Naive thymus-derived CD4-positive, alpha-beta T cell (primary cell): ENCODE measurements at regions of chr1 and their contacts with region 1.

Region 1: DNA sequence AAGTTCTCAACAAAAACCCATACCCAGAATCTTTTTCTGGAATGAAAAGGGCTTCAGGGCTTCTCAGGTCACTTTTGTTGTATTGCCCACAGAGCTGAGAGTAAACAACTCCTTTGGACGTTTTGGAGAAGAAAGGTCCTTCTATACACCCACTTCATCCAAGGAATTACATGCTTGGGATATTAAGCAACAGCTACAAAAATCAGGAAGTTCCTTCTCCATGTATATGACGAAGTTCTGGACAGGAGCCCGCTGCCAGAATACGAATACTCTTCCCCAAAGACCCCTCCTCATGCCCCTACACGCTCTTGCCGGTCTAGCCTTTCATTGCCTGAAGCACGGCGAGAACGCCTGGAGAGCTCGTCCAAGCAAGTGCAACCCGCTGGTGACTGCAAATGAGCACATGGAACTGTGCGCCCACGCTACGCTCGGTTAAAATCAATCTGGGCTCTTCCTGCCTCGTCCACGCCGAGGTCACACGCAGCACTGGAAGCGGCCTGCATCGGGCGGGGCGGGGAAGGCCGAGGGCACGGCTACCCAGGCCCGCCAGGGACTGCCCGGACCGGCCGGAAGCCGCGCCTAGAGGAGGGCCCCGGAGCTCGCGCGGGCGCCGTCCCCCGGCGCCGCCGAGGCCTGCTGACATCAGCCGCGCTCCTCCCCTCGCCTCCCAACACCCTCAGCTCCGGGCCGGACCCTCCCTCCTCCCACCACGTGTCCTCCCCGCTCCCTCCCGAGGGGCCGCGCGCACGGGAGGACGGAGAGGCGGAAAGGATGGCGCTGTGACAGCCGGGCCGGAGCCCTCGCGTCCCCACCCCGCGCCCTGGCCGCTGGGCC is at the start of gene POGK:
- DNase-seq: peak; percentile 70 to 89 (median 77)
- ATAC-seq: peak; percentile 95
- H3K4me3 ChIP-seq: peak within 1 kb of the TSS; percentile 60
- H3K4me3 Mint-ChIP-seq: peak within 1 kb of the TSS; percentile 89 to 97 (median 92)
- H3K27ac ChIP-seq: peak within 1 kb of the TSS; percentile 90
- H3K27ac Mint-ChIP-seq: peak within 1 kb of the TSS; percentile 91 to 100 (median 94)
- H3K4me1 ChIP-seq: peaks cover 13 to 21% of the 10 kb centered on the region in 2 donors
- H3K4me1 Mint-ChIP-seq: peaks cover 23 to 55% (median 48%) of the 10 kb centered on the region in 7 donors
- H3K27me3 ChIP-seq: no peaks in the 10 kb centered on the region
- H3K27me3 Mint-ChIP-seq: no peaks in the 10 kb centered on the region
- total RNA-seq, gene POGK: 24.7 to 38.7 (median 36.9) TPM

Region 2: DNA sequence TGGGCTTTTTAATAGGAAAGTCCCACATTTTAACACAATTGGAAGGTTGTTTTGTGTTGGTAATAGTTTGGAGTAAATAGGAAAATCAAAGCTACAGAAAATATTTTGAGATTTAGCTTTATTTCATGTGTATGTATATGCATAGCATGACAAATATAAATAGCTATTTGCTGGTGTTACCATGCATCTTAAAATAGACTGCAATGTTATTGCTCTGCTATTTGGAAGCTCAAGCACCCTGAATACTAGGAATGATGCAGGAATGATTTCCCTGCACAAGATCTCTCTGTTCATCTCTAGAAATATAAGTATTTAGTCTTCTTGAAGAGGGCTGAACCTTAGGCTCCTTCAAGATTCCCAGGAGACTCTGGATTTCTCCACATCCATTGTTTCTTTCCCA is 268.0 kb before region 1 on chr1:
- CTCF ChIA-PET with region 1: no interaction called
- POLR2A ChIA-PET with region 1: no interaction called
- intact Hi-C with region 1: no loop called
- DNase-seq: no peak
- ATAC-seq: no peak
- H3K4me3 ChIP-seq: no peak overlapping the region
- H3K4me3 Mint-ChIP-seq: no peak overlapping the region
- H3K27ac ChIP-seq: no peak overlapping the region
- H3K27ac Mint-ChIP-seq: no peak overlapping the region
- H3K4me1 ChIP-seq: no peaks in the 10 kb centered on the region
- H3K4me1 Mint-ChIP-seq: peaks cover 0 to 2% (median 0%) of the 10 kb centered on the region in 7 donors
- H3K27me3 ChIP-seq: no peaks in the 10 kb centered on the region
- H3K27me3 Mint-ChIP-seq: peaks cover 0 to 6% (median 4%) of the 10 kb centered on the region in 5 donors

Region 3: GRCh38 chr1:166875734-166876539 is 37.0 kb after region 1 on chr1 and contains the start of gene TADA1:
- CTCF ChIA-PET with region 1: no interaction called
- POLR2A ChIA-PET with region 1: interaction called, 18 read pairs
- intact Hi-C with region 1: loop called (anchors 1 kb)
- DNase-seq: peak; percentile 87 to 97 (median 96)
- ATAC-seq: peak; percentile 95
- H3K4me3 ChIP-seq: peak within 1 kb of the TSS; percentile 64
- H3K4me3 Mint-ChIP-seq: peak within 1 kb of the TSS; percentile 93 to 100 (median 96)
- H3K27ac ChIP-seq: peak within 1 kb of the TSS; percentile 83
- H3K27ac Mint-ChIP-seq: peak within 1 kb of the TSS; percentile 75 to 99 (median 98)
- H3K4me1 ChIP-seq: peaks cover 10 to 12% of the 10 kb centered on the region in 2 donors
- H3K4me1 Mint-ChIP-seq: peaks cover 43 to 63% (median 55%) of the 10 kb centered on the region in 7 donors
- H3K27me3 ChIP-seq: no peaks in the 10 kb centered on the region
- H3K27me3 Mint-ChIP-seq: peaks cover 0 to 11% (median 0%) of the 10 kb centered on the region in 5 donors
- total RNA-seq, gene TADA1: 9.4 to 16.2 (median 15.6) TPM